ENCODE measurements at regions of chr10 and their contacts with region 1.

Region 1: DNA sequence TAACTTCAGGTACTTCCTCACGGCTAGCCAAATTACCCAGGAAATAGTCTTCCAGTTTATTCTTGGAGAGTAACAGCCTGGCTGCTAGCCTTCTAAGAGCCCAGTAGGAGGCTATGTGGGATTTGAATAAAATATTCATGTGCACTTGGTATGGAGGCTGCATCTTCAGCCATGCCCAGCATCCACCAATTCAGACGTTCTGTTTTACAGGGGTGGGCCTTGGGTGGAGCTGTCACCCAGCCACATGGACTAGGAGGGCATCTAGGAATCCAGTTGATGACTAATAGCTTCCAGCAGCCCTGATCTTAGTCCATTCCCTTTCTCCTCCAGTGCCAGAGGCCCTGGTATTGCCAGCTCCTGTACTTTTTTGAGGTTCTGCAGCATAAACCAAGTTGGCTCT is 66.3 kb upstream of the ZRANB1 start:
- DNase-seq: no peak
- H3K4me3 ChIP-seq: no peak overlapping the region
- H3K27ac ChIP-seq: no peak overlapping the region
- H3K4me1 ChIP-seq: no peaks in the 10 kb centered on the region
- H3K27me3 ChIP-seq: no peaks in the 10 kb centered on the region
- CTCF ChIP-seq: no peak
- POLR2A ChIP-seq: no peak

Region 2: DNA sequence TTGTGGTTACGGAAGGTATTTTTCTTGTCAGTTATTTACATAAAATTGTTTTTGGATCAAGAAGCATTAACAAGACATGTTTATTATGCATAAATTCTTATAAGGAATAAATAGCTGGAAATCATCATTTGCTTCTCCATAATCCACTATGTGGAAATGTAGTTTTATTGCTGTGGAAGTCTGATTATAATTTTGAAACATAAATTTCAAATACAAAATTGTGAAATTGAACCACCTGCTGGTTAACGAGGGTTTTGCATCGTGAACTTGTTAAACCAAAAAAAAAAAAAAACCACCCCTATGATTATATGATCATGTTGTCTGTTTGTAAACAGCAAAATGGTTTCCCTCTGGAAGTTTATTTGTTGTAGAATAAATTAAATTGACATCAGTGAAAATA is 48.1 kb before region 1 on chr10:
- intact Hi-C with region 1: no loop called
- DNase-seq: no peak
- H3K4me3 ChIP-seq: no peak overlapping the region
- H3K27ac ChIP-seq: no peak overlapping the region
- H3K4me1 ChIP-seq: no peaks in the 10 kb centered on the region
- H3K27me3 ChIP-seq: no peaks in the 10 kb centered on the region
- CTCF ChIP-seq: peak in 4 of 6 experiments; percentile 12 to 50 (median 46)
- POLR2A ChIP-seq: no peak

Region 3: DNA sequence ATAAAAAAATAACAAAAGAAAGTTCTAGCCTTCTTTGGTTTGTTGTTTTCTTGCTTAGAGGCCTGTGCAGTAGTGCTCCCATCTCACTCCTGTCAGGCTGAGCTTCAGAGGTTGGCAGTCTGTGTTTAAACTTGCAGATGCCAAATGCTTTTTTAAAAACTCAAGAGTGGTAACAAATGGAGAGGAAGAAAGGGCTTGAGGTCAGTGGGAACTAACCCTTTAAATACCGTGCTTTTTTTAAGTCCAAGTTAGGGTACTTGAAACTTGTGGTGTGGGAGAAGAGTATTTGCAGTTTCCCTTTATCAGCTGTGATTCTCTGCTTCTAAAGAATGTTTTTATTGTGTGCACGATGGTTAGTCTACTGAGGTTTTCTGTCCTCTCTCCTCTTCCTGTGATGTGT is 95.7 kb after region 1 on chr10:
- intact Hi-C with region 1: no loop called
- DNase-seq: no peak
- H3K4me3 ChIP-seq: no peak overlapping the region
- H3K27ac ChIP-seq: peak overlapping the region; percentile 19 to 46 (median 44)
- H3K4me1 ChIP-seq: peaks cover 21 to 38% of the 10 kb centered on the region in 2 donors
- H3K27me3 ChIP-seq: no peaks in the 10 kb centered on the region
- CTCF ChIP-seq: no peak
- POLR2A ChIP-seq: no peak

Region 4: DNA sequence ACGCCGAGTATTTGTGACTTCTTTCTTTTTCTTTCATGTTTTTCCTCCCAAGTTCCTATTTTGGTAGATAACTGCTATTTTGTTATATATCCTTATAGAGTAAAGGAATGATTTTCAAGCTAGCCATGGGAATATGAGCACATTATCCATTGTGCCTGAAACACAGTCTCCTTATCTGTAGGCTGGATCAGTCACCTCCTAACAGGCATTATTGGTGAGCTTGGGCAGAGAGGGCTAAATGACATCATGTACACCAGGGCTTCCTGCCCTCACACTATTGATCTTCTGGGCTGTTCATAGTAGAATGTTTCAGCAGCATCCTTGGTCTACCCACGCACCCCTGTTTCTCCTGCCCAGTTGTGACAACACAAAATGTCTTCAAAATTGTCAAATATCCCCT is 372.9 kb after region 1 on chr10:
- intact Hi-C with region 1: loop called (anchors 10 kb)
- DNase-seq: no peak
- H3K4me3 ChIP-seq: no peak overlapping the region
- H3K27ac ChIP-seq: no peak overlapping the region
- H3K4me1 ChIP-seq: no peaks in the 10 kb centered on the region
- H3K27me3 ChIP-seq: no peaks in the 10 kb centered on the region
- CTCF ChIP-seq: no peak
- POLR2A ChIP-seq: no peak